Endothelial cell of umbilical vein (primary cell): ENCODE measurements at regions of chr6 and their contacts with region 1.

Region 1: DNA sequence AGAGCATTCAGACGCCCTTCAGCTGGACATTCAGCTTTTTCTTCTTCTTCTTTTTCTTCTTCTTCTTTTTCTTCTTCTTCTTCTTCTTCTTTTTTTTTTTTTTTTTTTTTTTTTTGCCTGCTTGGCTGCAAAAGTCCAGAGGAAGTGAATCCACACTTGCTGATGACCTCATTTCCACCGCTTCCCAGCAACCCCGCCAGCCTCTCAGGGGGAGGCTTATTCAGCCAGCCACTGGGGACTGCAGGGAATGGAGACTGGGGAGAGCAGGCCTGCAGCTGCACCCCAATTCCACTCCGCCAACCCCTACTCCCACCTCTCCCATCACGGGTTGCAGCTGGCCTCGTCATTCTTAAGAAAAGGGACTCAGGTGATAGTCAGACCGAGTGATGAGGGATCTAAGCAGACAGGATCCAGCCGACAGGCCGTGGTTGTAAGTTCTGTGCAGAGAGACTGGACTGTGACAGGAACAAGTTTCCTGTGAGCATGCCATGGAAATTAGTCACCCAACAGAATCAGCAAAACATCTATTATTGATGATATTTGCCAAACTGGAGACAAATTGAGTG is 59.0 kb upstream of the QKI start:
- DNase-seq: peak; percentile 93
- H3K4me3 ChIP-seq: peak overlapping the region in 2 of 3 experiments; percentile 23 to 51
- H3K27ac ChIP-seq: peak overlapping the region; percentile 97
- H3K4me1 ChIP-seq: peaks cover 36% of the 10 kb centered on the region
- H3K27me3 ChIP-seq: no peaks in the 10 kb centered on the region
- CTCF ChIP-seq: no peak
- POLR2A ChIP-seq: peak; percentile 72

Region 2: GRCh38 chr6:163180874-163181541 is 174.5 kb before region 1 on chr6:
- CTCF ChIA-PET with region 1: no interaction called
- POLR2A ChIA-PET with region 1: no interaction called
- dilution Hi-C with region 1: no loop called
- intact Hi-C with region 1: loop called (anchors 2 kb)
- DNase-seq: peak; percentile 71
- H3K4me3 ChIP-seq: no peak overlapping the region
- H3K27ac ChIP-seq: no peak overlapping the region
- H3K4me1 ChIP-seq: no peaks in the 10 kb centered on the region
- H3K27me3 ChIP-seq: peaks cover 4 to 9% of the 10 kb centered on the region in 2 experiments
- CTCF ChIP-seq: peak; percentile 93 to 97
- POLR2A ChIP-seq: no peak

Region 3: GRCh38 chr6:163284151-163284550 is 71.4 kb before region 1 on chr6:
- CTCF ChIA-PET with region 1: interaction called, 3 read pairs
- POLR2A ChIA-PET with region 1: no interaction called
- dilution Hi-C with region 1: no loop called
- intact Hi-C with region 1: loop called (anchors 1 kb)
- DNase-seq: peak; percentile 66
- H3K4me3 ChIP-seq: no peak overlapping the region
- H3K27ac ChIP-seq: peak overlapping the region; percentile 50
- H3K4me1 ChIP-seq: peaks cover 20% of the 10 kb centered on the region
- H3K27me3 ChIP-seq: no peaks in the 10 kb centered on the region
- CTCF ChIP-seq: no peak
- POLR2A ChIP-seq: peak; percentile 34

Region 4: GRCh38 chr6:163296835-163297519 is 58.5 kb before region 1 on chr6:
- CTCF ChIA-PET with region 1: no interaction called
- POLR2A ChIA-PET with region 1: no interaction called
- dilution Hi-C with region 1: no loop called
- intact Hi-C with region 1: no loop called
- DNase-seq: no peak
- H3K4me3 ChIP-seq: no peak overlapping the region
- H3K27ac ChIP-seq: no peak overlapping the region
- H3K4me1 ChIP-seq: peaks cover 1% of the 10 kb centered on the region
- H3K27me3 ChIP-seq: no peaks in the 10 kb centered on the region
- CTCF ChIP-seq: no peak
- POLR2A ChIP-seq: no peak

Region 5: DNA sequence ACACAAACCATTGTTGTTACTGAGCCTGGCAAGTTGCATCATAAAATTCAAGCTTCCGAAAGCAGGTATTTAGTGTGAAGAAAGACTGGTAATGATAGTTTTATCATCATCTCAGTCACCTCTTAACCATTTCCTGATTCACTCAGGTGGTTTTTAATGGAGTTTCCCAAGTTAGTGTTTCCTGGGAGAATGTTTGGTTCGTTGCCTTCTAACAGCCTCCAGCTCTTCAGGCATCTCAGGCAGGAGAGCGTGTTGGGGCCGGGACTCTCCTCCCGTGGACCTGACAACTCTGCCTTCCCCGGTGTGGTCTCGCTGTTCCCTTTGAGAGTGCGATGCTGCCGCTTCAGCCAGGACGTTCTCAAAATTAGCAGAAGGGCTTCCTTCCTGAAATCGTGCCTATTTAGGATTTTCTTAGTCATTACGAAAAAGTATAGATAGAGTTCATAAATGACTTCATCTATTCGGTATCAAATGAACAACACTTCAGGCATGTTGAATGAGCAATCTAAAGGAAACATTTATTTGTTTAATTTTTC is 46.0 kb before region 1 on chr6:
- CTCF ChIA-PET with region 1: interaction called, 4 read pairs
- POLR2A ChIA-PET with region 1: no interaction called
- dilution Hi-C with region 1: no loop called
- intact Hi-C with region 1: loop called (anchors 1 kb)
- DNase-seq: peak; percentile 63
- H3K4me3 ChIP-seq: no peak overlapping the region
- H3K27ac ChIP-seq: peak overlapping the region; percentile 63
- H3K4me1 ChIP-seq: peaks cover 25% of the 10 kb centered on the region
- H3K27me3 ChIP-seq: no peaks in the 10 kb centered on the region
- CTCF ChIP-seq: no peak
- POLR2A ChIP-seq: no peak

Region 6: DNA sequence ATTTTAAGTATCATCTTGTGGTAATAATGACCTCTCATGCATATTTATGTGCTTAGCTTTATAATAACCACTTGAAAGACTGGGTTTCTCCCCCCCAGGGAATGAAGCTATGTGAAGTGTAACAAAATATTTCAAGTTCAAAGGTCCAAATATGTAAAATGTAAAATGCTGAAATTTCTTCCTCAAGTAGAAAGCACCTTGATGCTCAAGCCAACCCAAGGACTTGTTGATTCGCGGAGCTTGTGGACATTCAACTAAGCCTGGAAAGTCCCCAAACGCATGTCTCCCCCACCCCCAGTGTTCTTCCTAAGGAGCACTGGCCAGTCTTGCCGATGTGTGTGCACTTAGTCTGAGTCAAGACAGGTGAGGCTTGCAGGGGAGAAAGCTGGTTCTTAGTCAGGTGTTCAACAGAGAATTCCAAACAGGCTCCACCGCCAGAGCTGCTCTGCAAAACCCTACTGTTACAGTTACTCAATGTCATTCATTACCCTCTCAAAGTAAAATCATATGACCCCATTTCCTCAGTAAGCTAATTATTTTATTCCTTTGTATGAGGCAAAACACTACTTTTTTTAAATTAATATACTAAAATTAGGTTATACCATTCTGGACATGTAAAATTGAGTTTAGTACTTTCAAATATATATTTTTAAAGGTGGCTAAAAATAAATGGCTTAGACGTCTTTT is 12.1 kb after region 1 on chr6:
- CTCF ChIA-PET with region 1: interaction called, 3 read pairs
- POLR2A ChIA-PET with region 1: interaction called, 6 read pairs
- dilution Hi-C with region 1: no loop called
- intact Hi-C with region 1: loop called (anchors 1 kb)
- DNase-seq: peak; percentile 52
- H3K4me3 ChIP-seq: no peak overlapping the region
- H3K27ac ChIP-seq: peak overlapping the region; percentile 46
- H3K4me1 ChIP-seq: peaks cover 15% of the 10 kb centered on the region
- H3K27me3 ChIP-seq: no peaks in the 10 kb centered on the region
- CTCF ChIP-seq: no peak
- POLR2A ChIP-seq: no peak

Region 7: GRCh38 chr6:163387317-163387716 is 31.8 kb after region 1 on chr6:
- CTCF ChIA-PET with region 1: no interaction called
- POLR2A ChIA-PET with region 1: no interaction called
- dilution Hi-C with region 1: no loop called
- intact Hi-C with region 1: loop called (anchors 1 kb)
- DNase-seq: peak; percentile 95
- H3K4me3 ChIP-seq: no peak overlapping the region
- H3K27ac ChIP-seq: peak overlapping the region; percentile 9
- H3K4me1 ChIP-seq: peaks cover 12% of the 10 kb centered on the region
- H3K27me3 ChIP-seq: no peaks in the 10 kb centered on the region
- CTCF ChIP-seq: no peak
- POLR2A ChIP-seq: peak; percentile 39

Region 8: DNA sequence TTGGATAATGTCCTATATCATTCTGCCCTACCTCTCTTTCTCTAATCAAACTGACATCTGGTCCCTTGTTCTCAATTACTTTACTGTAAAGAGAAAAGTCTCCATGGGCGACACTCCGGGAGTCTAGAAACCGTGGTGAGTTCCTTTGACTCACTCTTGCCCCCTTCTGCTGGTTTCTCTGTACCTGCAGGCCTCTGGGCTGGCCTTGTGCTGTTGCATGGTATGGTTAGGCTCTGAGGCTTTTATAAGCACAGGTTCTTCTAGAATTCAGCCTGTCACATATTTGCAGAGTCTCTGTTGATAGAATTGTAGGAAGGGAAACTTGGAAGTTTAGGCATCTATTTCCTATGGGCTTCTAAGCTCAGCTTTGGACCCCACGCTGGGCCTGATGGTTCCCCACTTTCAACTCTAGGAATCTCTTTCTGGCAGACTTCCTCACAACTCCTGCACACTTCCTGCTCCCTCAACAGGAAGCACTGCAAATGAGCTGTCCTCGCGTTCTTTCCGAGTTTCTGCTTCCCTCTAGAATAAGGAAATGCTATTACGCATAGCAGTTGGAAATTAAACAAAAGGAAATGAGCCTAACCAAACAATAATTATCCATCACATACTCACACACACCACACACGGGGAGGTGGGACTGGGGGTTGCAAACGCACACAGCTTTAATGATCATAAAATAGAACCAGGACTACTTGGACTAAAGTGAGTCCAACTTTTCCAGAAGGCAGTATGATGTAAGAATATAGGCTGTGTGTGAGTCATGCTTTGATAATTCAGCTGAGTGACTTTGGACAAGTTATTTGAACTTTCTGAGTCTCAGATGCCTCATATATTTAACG is 742.3 kb after region 1 on chr6:
- CTCF ChIA-PET with region 1: no interaction called
- POLR2A ChIA-PET with region 1: no interaction called
- dilution Hi-C with region 1: no loop called
- intact Hi-C with region 1: loop called (anchors 5 kb)
- DNase-seq: peak; percentile 94
- H3K4me3 ChIP-seq: no peak overlapping the region
- H3K27ac ChIP-seq: peak overlapping the region; percentile 59
- H3K4me1 ChIP-seq: peaks cover 23% of the 10 kb centered on the region
- H3K27me3 ChIP-seq: no peaks in the 10 kb centered on the region
- CTCF ChIP-seq: peak; percentile 22 to 51
- POLR2A ChIP-seq: no peak